Activated naive CD4-positive, alpha-beta T cell treated with anti-CD3 and anti-CD28 coated beads for 36 hours (primary cell): ENCODE measurements at regions of chr14 and their contacts with region 1.

Region 1: GRCh38 chr14:98138666-98139065 is 1133.3 kb downstream of the BCL11B start:
- DNase-seq: peak; percentile 77
- H3K4me3 Mint-ChIP-seq: peak overlapping the region; percentile 71
- H3K27ac Mint-ChIP-seq: peak overlapping the region; percentile 98
- H3K4me1 Mint-ChIP-seq: peaks cover 81% of the 10 kb centered on the region
- H3K27me3 Mint-ChIP-seq: no peaks in the 10 kb centered on the region

Region 2: GRCh38 chr14:97458661-97459579 is 679.7 kb before region 1 on chr14:
- CTCF ChIA-PET with region 1: interaction called, 3 read pairs
- intact Hi-C with region 1: loop called (anchors 10 kb)
- DNase-seq: peak; percentile 91
- H3K4me3 Mint-ChIP-seq: peak overlapping the region; percentile 96
- H3K27ac Mint-ChIP-seq: peak overlapping the region; percentile 100
- H3K4me1 Mint-ChIP-seq: peaks cover 32% of the 10 kb centered on the region
- H3K27me3 Mint-ChIP-seq: no peaks in the 10 kb centered on the region

Region 3: DNA sequence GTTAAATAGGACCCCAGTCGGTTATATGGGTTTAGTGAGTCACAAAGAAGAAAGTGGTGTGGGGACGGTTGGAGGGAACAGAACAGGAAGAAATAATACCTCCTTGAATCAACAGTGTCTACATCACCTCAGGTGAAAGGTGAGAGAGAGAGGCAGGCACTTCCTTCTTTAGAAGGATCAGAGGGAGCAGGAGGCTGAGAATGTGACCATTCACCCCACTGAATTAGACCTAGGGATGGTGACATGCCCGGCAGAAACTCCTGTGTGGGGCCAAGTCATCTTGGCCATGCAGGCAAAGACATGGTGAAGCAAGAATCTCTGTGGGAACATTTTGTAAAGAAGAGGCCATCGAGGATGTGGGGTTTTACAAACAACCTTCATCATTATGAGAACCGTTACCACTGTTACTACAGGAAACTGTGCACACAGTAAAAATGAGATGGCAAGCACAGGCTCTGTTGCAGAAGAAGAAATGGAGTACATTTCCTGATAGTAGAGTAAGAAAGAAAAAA is 144.6 kb before region 1 on chr14:
- CTCF ChIA-PET with region 1: interaction called, 6 read pairs
- intact Hi-C with region 1: loop called (anchors 1 kb)
- DNase-seq: peak; percentile 71
- H3K4me3 Mint-ChIP-seq: peak overlapping the region; percentile 70
- H3K27ac Mint-ChIP-seq: peak overlapping the region; percentile 100
- H3K4me1 Mint-ChIP-seq: peaks cover 82% of the 10 kb centered on the region
- H3K27me3 Mint-ChIP-seq: no peaks in the 10 kb centered on the region

Region 4: DNA sequence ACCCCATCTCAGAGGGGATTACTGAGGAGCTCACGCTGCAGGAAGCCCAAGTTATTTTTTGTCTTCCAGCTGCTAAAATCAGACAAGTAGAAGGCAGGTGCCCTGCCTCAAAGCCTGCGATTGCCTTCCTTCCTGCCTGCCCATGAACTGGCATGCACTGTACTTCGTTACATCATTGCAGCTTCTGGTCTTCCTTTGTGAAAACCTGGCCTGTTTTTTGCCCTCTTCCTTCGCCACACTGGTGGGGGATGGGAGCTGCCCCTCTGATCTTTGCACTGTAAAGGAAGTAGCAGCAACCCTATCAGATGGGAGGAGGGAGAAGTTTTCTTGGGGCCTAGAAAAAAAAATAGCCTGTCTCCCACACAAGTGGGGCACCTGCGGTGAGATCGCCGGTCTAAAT is 34.6 kb after region 1 on chr14:
- CTCF ChIA-PET with region 1: interaction called, 57 read pairs
- intact Hi-C with region 1: loop called (anchors 1 kb)
- DNase-seq: peak; percentile 78
- H3K4me3 Mint-ChIP-seq: peak overlapping the region; percentile 49
- H3K27ac Mint-ChIP-seq: peak overlapping the region; percentile 98
- H3K4me1 Mint-ChIP-seq: peaks cover 97% of the 10 kb centered on the region
- H3K27me3 Mint-ChIP-seq: no peaks in the 10 kb centered on the region

Region 5: DNA sequence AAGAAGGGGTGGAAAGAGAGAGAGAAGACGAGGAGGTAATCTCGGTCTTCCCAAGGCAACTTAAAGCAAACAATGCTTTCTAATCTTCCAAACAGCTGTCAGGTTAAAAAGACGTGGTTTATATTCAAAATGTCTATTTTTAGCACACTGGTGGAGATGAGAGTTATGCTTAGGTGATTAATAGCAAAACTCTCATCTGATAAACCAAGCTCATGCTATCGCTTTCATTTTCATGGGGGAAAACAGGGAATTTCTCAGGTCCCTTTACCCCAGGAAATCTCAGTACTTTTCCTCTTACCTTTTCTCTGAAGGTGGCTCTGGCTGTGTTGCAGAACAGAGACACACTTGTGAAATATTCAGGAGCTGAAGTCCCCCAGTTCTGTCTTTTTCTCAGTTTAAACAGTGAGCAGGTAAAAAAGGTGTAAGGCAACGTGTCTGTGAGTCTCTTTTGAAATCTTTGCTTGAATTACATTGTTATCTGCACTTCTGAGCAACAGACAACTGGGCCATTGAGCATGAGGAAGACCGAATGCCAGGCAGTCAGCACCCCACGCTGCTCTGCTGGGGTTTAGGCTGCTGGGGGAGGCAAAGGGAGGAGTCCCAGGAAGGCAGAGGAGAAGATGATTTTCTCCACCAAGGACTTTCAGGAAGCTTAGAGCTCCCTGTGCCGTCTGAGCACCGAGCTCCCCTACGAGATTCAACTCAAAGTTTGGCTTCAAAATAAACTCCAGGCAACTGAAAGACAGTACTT is 374.0 kb after region 1 on chr14:
- CTCF ChIA-PET with region 1: no interaction called
- intact Hi-C with region 1: loop called (anchors 2 kb)
- DNase-seq: no peak
- H3K4me3 Mint-ChIP-seq: peak overlapping the region; percentile 30
- H3K27ac Mint-ChIP-seq: peak overlapping the region; percentile 73
- H3K4me1 Mint-ChIP-seq: peaks cover 40% of the 10 kb centered on the region
- H3K27me3 Mint-ChIP-seq: no peaks in the 10 kb centered on the region

Region 6: DNA sequence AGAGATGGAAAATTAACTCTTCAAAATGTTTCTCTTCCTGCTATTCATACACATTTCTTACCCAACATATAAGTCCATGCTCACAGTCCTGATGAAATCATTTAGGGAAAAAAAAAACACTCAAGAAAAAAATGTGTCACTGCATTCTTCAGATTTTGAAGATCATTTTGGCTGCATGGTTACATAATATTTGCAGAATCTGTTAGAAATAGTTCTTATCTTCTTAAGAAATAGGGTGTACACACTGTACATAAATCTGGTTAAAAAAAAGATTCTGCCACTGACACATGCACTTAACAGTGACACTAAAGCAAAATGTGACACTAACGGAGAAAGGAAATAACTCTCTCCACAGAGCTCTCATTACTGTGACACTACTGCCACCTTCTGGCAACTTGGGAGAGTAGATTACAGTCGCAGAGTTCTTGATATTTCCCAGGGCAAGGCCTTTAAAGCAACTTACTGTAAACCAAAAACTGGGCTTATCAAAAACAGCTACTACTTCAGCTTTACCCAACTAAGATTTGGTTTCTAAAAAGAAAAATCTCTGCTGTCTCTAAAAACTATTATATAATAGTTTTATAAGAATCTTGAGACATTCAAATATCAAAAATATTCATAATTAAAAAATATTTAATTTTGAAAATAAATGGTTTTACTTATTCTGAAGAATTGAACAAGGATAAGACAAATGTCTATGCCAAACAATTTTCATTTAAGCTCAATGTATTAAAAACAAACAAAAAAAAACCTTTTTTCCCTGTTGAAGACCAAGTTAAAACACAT is 1277.0 kb after region 1 on chr14:
- CTCF ChIA-PET with region 1: no interaction called
- intact Hi-C with region 1: loop called (anchors 5 kb)
- DNase-seq: peak; percentile 80
- H3K4me3 Mint-ChIP-seq: no peak overlapping the region
- H3K27ac Mint-ChIP-seq: no peak overlapping the region
- H3K4me1 Mint-ChIP-seq: peaks cover 20% of the 10 kb centered on the region
- H3K27me3 Mint-ChIP-seq: no peaks in the 10 kb centered on the region